Ascending aorta (tissue), 2 donors: ENCODE measurements at regions of chr10 and their contacts with region 1.

Region 1: DNA sequence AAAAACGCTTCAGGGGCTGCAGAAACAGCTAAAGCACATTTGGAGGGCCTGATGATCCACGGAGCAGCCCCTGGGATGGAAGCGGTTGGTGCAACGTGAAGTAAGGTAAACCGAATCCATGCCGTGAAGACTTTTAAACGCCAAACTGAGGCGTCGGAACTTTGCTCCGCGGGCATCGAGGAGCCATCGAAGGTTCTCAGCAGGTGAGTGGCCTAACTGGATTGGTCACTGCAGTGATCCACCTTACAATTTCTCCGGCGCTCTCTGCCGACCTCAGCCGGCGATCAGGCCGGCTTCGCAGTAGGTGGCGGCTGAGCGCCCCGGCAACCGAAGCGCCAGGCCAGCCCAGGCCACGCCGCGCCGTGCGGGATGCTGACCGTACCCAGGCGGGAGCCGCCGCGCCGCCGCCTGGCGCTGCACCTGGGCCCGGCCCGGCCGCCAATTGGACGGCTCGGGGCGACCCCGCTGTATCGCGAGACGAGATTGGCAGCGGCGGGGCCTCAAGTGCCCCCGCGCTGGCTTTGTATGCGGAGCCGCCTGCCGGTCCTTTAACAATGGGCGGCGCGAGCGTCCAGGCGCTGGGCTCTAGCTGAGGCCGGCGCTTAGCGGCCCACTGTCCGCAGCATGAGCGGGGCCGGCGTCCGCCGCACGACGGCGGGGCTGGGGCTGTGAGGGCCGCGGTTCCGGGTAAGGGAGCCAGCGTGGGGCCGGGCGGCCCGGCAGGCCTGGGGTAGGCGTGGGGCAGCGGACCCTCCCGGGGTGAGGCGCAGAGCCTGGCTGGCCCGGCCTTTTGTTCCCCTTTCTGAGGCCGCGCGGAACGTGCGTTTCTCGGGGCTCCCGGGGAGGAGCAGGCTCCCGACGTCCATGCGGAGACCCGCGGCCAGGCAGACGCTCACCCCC is at the start of gene CCNJ:
- DNase-seq: peak; percentile 61 to 93
- H3K4me3 ChIP-seq: peak within 1 kb of the TSS; percentile 89 to 93
- H3K27ac ChIP-seq: peak within 1 kb of the TSS; percentile 85 to 87
- H3K4me1 ChIP-seq: peaks cover 2 to 3% of the 10 kb centered on the region in 2 donors
- H3K27me3 ChIP-seq: no peaks in the 10 kb centered on the region
- CTCF ChIP-seq: peak in 2 of 3 experiments; percentile 18 to 19
- total RNA-seq, gene CCNJ: 6.0 TPM

Region 2: GRCh38 chr10:95880704-95881103 is 162.6 kb before region 1 on chr10:
- intact Hi-C with region 1: loop called (anchors 5 kb)
- DNase-seq: no peak
- H3K4me3 ChIP-seq: no peak overlapping the region
- H3K27ac ChIP-seq: peak overlapping the region; percentile 70 to 86
- H3K4me1 ChIP-seq: peaks cover 7 to 31% of the 10 kb centered on the region in 2 donors
- H3K27me3 ChIP-seq: no peaks in the 10 kb centered on the region
- CTCF ChIP-seq: no peak

Region 3: GRCh38 chr10:95907456-95908253 is 135.6 kb before region 1 on chr10 and contains the start of gene CC2D2B:
- intact Hi-C with region 1: loop called (anchors 5 kb)
- DNase-seq: peak; percentile 26 to 91
- H3K4me3 ChIP-seq: peak within 1 kb of the TSS; percentile 73 to 80
- H3K27ac ChIP-seq: peak within 1 kb of the TSS; percentile 82 to 83
- H3K4me1 ChIP-seq: peaks cover 0 to 4% of the 10 kb centered on the region in 2 donors
- H3K27me3 ChIP-seq: no peaks in the 10 kb centered on the region
- CTCF ChIP-seq: peak in 2 of 3 experiments; percentile 11 to 23
- total RNA-seq, gene CC2D2B: 3.9 TPM

Region 4: GRCh38 chr10:96089670-96090462 is 46.6 kb after region 1 on chr10:
- intact Hi-C with region 1: loop called (anchors 2 kb)
- DNase-seq: peak; percentile 73 to 97
- H3K4me3 ChIP-seq: peak overlapping the region; percentile 68 to 88
- H3K27ac ChIP-seq: peak overlapping the region; percentile 79 to 92
- H3K4me1 ChIP-seq: peaks cover 0 to 3% of the 10 kb centered on the region in 2 donors
- H3K27me3 ChIP-seq: no peaks in the 10 kb centered on the region
- CTCF ChIP-seq: no peak

Region 5: GRCh38 chr10:96129387-96130325 is 86.4 kb after region 1 on chr10 and contains the start of gene ZNF518A:
- intact Hi-C with region 1: loop called (anchors 1 kb)
- DNase-seq: peak; percentile 47 to 94
- H3K4me3 ChIP-seq: peak within 1 kb of the TSS; percentile 90 to 95
- H3K27ac ChIP-seq: peak within 1 kb of the TSS; percentile 97 to 98
- H3K4me1 ChIP-seq: no peaks in the 10 kb centered on the region
- H3K27me3 ChIP-seq: no peaks in the 10 kb centered on the region
- CTCF ChIP-seq: no peak
- total RNA-seq, gene ZNF518A: 7.1 TPM